ENCODE measurements at regions of chr2 and their contacts with region 1.

Region 1: DNA sequence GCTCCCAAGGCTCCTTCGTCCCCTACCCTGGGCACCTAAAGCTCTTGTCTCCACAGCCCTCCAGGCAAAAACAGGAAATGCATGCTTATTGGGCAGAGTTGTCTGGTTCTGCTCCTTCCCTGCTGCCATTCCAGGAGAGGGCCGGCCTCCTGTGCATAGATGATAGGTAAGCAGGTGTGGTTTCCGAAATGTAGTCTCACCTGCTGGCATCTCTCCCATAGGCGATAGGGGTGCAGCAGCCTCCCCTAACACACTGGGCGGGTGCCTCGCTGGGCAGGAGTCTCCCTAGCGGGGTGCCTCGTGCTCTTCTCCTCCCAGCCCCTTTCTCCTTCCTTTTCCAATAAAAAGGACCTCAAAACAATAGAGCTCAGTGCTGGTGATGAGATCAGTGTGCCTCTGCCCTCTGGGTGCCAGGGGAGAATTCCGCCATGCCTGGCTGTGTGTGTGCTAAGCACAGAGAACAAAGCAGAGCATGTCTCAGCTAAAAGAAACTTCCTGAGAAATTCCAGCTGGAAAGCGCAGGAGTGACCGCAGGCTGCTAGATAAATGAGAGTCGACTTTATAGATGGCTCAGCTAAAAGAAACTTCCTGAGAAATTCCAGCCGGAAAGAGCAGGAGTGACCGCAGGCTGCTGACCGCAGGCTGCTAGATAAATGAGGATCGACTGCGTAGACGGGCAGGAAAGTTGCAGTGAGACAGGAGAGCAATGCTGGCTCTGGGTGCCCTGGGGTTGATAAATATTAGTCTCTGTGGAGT is 11.3 kb upstream of the PXDN start:
- DNase-seq: no peak
- ATAC-seq: no peak
- H3K4me3 ChIP-seq: no peak overlapping the region
- H3K27ac ChIP-seq: no peak overlapping the region
- H3K4me1 ChIP-seq: no peaks in the 10 kb centered on the region
- H3K27me3 ChIP-seq: peaks cover 2 to 58% of the 10 kb centered on the region in 2 experiments
- CTCF ChIP-seq: no peak
- EP300 ChIP-seq: no peak
- POLR2A ChIP-seq: no peak
- RAD21 ChIP-seq: no peak

Region 2: GRCh38 chr2:598058-598802 is 1157.4 kb before region 1 on chr2:
- CTCF ChIA-PET with region 1: no interaction called
- POLR2A ChIA-PET with region 1: no interaction called
- in situ Hi-C with region 1: no loop called
- intact Hi-C with region 1: loop called (anchors 5 kb)
- DNase-seq: no peak
- ATAC-seq: no peak
- H3K4me3 ChIP-seq: no peak overlapping the region
- H3K27ac ChIP-seq: no peak overlapping the region
- H3K4me1 ChIP-seq: no peaks in the 10 kb centered on the region
- H3K27me3 ChIP-seq: peaks cover 20 to 93% of the 10 kb centered on the region in 2 experiments
- CTCF ChIP-seq: no peak
- EP300 ChIP-seq: no peak
- POLR2A ChIP-seq: no peak
- RAD21 ChIP-seq: no peak